Activated T-helper 2 cell treated with anti-CD3 and anti-CD28 coated beads, Interferon-gamma antibody, Interleukin-2, Interleukin-4, amounts not matched to agents 10 μg/mL and 5 μg/mL and 100 μg/mL, durations not matched to agents 14 hours and 24 hours and 36 hours (primary cell): ENCODE measurements at regions of chr15 and their contacts with region 1.

Region 1: GRCh38 chr15:88897456-88898194 is 2.3 kb upstream of the HAPLN3 start:
- DNase-seq: peak; percentile 78
- H3K4me3 Mint-ChIP-seq: no peak overlapping the region
- H3K27ac Mint-ChIP-seq: no peak overlapping the region
- H3K4me1 Mint-ChIP-seq: peaks cover 23% of the 10 kb centered on the region
- H3K27me3 Mint-ChIP-seq: no peaks in the 10 kb centered on the region

Region 2: DNA sequence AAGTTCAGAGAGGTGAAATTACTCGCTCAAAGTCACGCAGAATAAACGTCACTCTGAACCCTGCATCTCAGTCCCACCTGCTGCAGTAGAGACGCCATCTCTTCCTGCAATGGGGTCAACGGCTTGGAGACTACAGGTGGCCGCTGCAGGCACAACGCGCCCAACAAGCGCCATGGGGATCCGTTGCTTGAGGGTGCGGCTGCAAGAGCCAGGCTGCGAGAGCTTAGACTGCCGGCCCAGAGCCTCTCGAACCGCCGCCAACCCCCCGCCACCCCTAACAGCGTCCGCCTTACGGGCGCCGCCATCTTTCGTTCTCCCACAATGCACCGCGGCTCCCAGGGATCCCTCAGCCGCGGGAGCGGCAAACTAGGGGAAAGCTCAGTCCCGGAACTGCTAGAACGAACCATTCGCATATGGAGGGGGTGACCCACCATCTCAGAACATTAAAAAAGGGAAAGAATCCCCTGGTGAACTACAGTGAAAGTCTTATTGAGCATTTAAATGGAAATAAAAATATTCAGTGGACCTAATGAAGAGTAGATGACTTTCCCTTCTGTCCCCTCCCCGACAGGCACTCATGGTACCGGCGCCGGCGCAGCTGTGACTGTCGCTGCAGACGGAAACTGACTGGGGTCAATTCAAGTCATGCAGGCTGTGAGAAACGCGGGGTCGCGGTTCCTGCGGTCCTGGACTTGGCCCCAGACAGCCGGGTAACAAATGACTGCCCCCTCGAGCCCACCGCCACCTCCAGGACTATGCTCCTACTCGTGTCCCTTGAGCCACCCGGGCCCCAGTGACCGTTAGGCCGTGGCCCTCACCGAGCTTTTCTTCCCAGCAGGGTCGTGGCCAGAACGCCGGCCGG is 430.3 kb before region 1 on chr15 and contains the starts of genes MRPL46 and MRPS11:
- intact Hi-C with region 1: loop called (anchors 2 kb)
- DNase-seq: peak; percentile 86
- H3K4me3 Mint-ChIP-seq: peak within 1 kb of the TSS; percentile 96
- H3K27ac Mint-ChIP-seq: peak within 1 kb of the TSS; percentile 94
- H3K4me1 Mint-ChIP-seq: peaks cover 26% of the 10 kb centered on the region
- H3K27me3 Mint-ChIP-seq: no peaks in the 10 kb centered on the region
- total RNA-seq, gene MRPL46: 39.8 and 42.4 TPM in 2 replicates
- total RNA-seq, gene MRPS11: 69.5 and 71.0 TPM in 2 replicates

Region 3: DNA sequence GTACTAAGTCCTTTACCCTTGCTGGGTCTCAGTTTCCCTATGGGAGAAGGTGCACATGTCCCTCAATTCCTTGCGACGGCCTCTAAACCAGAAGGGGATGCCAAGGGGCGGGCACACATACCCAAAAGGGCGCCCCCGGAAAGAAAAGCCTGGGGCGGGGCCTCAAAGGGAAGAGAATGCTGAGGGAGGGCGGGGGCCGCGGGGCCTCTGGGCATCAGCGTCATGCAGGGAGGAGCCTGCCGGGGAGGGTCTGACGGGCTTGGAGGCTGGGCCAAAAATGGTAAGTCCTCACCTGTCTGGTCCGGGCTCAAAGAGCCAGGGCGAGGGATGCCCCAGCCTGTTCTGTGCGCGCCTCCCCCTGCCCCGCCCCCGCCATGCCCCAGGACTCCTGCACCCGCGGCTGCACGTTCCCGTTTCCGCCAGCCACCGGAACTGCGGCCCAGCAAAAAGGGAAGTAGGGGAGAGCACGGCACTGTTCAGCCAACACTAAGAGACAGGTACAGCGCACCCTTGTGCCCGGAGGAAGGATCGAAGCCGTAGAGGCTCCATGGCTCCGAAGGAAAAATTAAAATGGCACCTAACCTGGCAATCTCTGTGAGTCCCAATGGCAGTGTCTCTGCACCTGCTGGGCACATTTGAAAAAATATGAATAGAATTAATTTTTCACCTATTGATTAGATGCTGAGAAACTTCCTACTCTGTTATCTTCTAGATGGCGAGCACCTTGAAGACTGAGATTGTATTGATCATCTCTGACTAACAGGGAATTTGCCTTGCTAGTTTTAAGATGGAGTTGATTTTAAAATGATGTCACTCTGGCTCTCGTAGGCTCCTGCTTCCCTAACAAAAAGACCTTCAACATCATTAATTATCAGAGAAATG is 351.1 kb before region 1 on chr15 and contains the start of gene DET1:
- intact Hi-C with region 1: loop called (anchors 10 kb)
- DNase-seq: peak; percentile 92
- H3K4me3 Mint-ChIP-seq: peak within 1 kb of the TSS; percentile 87
- H3K27ac Mint-ChIP-seq: peak within 1 kb of the TSS; percentile 85
- H3K4me1 Mint-ChIP-seq: peaks cover 8% of the 10 kb centered on the region
- H3K27me3 Mint-ChIP-seq: no peaks in the 10 kb centered on the region
- total RNA-seq, gene DET1: 1.5 and 2.6 TPM in 2 replicates

Region 4: GRCh38 chr15:88849376-88850072 is 48.1 kb before region 1 on chr15:
- intact Hi-C with region 1: no loop called
- DNase-seq: no peak
- H3K4me3 Mint-ChIP-seq: no peak overlapping the region
- H3K27ac Mint-ChIP-seq: no peak overlapping the region
- H3K4me1 Mint-ChIP-seq: peaks cover 6% of the 10 kb centered on the region
- H3K27me3 Mint-ChIP-seq: no peaks in the 10 kb centered on the region

Region 5: DNA sequence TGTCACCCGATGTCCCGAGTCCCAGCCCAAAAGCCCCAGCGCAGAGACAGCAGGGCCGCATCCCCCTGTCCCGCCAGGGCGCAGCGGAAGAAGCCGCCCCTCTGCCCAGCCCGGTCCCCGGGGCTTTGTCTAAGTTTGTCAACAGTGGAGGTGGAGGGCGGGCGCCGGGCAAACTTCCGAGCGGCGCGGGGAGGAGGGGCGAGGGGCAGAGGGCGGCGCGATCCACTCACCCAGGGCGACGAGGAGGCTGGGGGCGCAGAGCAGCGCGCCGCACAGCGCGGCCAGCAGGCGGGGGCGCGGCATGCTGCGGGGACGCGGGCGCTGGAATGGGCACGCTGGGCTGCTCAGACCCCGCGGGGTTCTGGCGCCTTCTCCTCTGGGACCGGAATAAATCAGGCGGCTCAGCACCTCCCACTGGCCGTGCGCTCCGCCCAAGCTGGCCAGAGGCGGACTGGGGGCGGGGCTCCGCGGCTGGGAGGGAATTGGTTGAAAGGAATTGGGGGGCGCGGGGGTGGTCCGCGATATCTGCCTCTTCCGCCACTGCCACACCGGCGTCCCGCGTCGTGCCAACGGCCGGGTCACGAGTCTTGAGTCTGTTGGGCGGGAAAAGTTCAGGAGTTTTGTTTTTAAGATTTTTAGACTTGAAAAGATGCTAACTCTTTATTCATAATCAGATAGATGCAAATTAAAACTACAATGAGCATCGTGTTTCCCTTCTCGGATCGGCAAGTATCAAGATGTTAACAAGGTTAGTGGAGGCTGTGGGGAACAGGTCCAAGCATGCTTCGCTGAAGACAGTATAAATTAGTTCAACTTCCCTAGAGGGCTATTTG is 15.6 kb after region 1 on chr15 and contains the start of gene MFGE8:
- intact Hi-C with region 1: loop called (anchors 2 kb)
- DNase-seq: peak; percentile 69
- H3K4me3 Mint-ChIP-seq: peak within 1 kb of the TSS; percentile 93
- H3K27ac Mint-ChIP-seq: peak within 1 kb of the TSS; percentile 79
- H3K4me1 Mint-ChIP-seq: peaks cover 16% of the 10 kb centered on the region
- H3K27me3 Mint-ChIP-seq: peaks cover 4% of the 10 kb centered on the region
- total RNA-seq, gene MFGE8: 13.4 and 13.7 TPM in 2 replicates

Region 6: DNA sequence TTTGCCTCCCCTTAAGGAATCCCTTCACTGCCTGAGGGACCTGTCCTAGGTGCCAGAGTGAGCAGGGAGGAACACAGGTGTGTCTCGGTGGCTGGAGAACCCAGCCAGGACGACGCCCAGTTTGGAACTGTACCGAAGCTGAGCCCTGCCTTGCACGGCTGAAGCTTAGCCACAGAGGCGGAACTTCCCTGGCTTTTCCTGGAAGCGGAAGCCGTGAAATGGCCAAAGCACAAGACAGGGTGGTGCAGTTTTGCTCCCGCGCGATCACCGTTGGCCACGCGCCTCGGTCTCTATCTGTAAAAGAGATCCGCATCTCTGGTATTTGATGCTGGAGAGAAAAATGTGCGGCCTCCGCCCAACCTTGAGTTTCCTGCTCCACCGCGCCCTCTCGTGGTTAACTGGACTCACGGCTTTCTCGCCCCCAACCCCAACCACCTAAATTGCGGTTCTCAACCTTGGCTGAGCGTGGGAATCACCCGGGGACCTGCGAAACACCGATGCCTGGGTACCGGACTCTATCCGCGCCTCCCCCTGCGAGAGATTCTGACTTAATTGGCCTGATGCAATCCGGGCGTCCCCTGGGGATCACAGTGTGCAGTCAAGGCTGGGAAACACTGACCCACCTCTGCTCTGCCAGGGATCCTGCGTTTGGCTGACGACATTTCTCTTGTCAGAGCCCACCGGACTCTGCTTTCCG is 119.9 kb after region 1 on chr15:
- intact Hi-C with region 1: loop called (anchors 1 kb)
- DNase-seq: peak; percentile 78
- H3K4me3 Mint-ChIP-seq: peak overlapping the region; percentile 43
- H3K27ac Mint-ChIP-seq: no peak overlapping the region
- H3K4me1 Mint-ChIP-seq: peaks cover 18% of the 10 kb centered on the region
- H3K27me3 Mint-ChIP-seq: peaks cover 35% of the 10 kb centered on the region